ENCODE measurements at regions of chr2 and their contacts with region 1.

Region 1: DNA sequence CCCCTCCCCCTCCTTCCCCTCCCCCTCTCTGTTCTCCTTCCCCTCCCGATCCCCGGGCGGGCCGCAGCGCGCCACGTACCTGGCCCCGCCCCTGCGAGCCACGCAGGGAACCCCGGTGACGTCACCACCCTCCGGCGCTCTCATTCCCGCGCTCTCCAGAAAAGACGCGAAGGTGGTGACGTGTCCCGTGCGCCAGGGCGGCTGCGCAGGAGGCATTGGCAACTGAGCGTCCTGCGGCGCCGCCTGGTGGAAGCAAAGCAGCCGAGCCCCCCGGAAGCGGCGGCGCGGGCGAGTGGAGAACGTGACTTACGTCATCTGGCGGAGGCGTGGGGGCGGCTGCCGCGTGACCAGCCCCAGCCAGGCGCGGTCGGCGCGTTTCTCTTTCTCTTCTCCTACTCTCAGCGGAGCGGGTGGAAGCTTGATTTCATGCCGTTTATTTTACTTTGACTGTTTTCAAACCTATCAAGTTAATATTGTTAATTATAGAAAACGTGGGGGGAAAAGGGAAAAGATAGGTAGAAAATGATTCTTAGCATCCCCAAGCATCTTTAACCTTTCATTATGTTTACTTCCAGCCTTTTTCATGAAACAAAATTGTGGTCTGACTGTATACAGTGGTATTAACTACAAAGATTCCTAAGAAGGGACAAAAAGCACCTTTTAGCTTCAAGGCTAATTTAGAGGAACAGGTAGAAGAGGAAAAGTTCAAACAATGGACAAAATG is 48.1 kb downstream of the C2orf42 start:
- DNase-seq: peak; percentile 100
- H3K4me3 Mint-ChIP-seq: peak overlapping the region; percentile 84
- H3K27ac Mint-ChIP-seq: peak overlapping the region; percentile 97
- H3K4me1 Mint-ChIP-seq: peaks cover 49% of the 10 kb centered on the region
- H3K27me3 Mint-ChIP-seq: no peaks in the 10 kb centered on the region

Region 2: DNA sequence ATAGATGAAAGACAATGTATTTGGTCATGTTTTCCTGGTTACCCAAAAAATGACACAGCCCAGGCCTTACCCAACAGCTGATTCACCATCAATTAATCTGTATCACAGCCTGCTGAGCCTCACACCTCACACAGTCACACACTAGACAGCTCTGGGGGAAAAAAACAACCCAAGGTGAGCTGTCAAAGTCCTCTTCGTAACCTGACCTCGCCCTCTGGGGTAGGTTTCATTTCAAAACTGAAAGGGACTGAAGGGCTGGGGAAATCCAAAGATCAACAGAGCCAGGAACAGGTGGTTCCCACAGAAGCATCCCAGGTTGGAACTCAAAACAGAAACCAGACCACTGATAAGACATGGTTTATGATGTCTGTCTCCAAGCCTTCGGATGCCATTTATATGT is 73.7 kb before region 1 on chr2:
- intact Hi-C with region 1: loop called (anchors 1 kb)
- DNase-seq: peak; percentile 75
- H3K4me3 Mint-ChIP-seq: no peak overlapping the region
- H3K27ac Mint-ChIP-seq: peak overlapping the region; percentile 86
- H3K4me1 Mint-ChIP-seq: peaks cover 41% of the 10 kb centered on the region
- H3K27me3 Mint-ChIP-seq: no peaks in the 10 kb centered on the region

Region 3: GRCh38 chr2:70104231-70105111 is 38.3 kb before region 1 on chr2:
- intact Hi-C with region 1: loop called (anchors 2 kb)
- DNase-seq: peak; percentile 29
- H3K4me3 Mint-ChIP-seq: peak overlapping the region; percentile 78
- H3K27ac Mint-ChIP-seq: peak overlapping the region; percentile 90
- H3K4me1 Mint-ChIP-seq: peaks cover 52% of the 10 kb centered on the region
- H3K27me3 Mint-ChIP-seq: no peaks in the 10 kb centered on the region

Region 4: GRCh38 chr2:70132244-70133126 is 10.3 kb before region 1 on chr2:
- intact Hi-C with region 1: loop called (anchors 1 kb)
- DNase-seq: no peak
- H3K4me3 Mint-ChIP-seq: peak overlapping the region; percentile 87
- H3K27ac Mint-ChIP-seq: peak overlapping the region; percentile 99
- H3K4me1 Mint-ChIP-seq: peaks cover 61% of the 10 kb centered on the region
- H3K27me3 Mint-ChIP-seq: no peaks in the 10 kb centered on the region

Region 5: GRCh38 chr2:70248181-70248847 is 105.6 kb after region 1 on chr2 and contains the start of gene TIA1:
- intact Hi-C with region 1: loop called (anchors 2 kb)
- DNase-seq: peak; percentile 98
- H3K4me3 Mint-ChIP-seq: peak within 1 kb of the TSS; percentile 95
- H3K27ac Mint-ChIP-seq: peak within 1 kb of the TSS; percentile 98
- H3K4me1 Mint-ChIP-seq: peaks cover 22% of the 10 kb centered on the region
- H3K27me3 Mint-ChIP-seq: no peaks in the 10 kb centered on the region
- total RNA-seq, gene TIA1: 113 TPM in 2 replicates

Region 6: DNA sequence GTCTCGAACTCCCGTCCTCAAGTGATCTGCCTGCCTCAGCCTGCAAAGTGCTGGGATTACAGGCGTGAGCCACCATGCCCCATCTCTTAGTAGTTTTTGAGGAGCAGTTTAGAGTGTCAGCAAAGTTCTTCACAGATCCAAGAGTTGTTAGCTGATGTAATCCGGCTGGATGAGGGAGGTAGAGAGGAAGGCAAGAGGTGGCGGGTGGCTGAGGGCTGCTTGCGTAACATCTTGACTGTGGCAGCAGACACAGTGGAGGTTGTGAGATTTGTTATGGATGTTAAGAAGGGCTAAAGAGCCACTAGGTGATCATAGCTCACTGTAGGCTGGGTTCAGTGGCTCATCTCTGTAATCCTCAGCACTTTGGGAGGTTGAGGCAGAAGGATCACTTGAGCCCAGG is 178.6 kb after region 1 on chr2:
- intact Hi-C with region 1: no loop called
- DNase-seq: no peak
- H3K4me3 Mint-ChIP-seq: no peak overlapping the region
- H3K27ac Mint-ChIP-seq: no peak overlapping the region
- H3K4me1 Mint-ChIP-seq: peaks cover 2% of the 10 kb centered on the region
- H3K27me3 Mint-ChIP-seq: peaks cover 21% of the 10 kb centered on the region

Measured in activated T-helper 2 cell treated with anti-CD3 and anti-CD28 coated beads, Interferon-gamma antibody, Interleukin-2, Interleukin-4, amounts not matched to agents 10 μg/mL and 5 μg/mL and 100 μg/mL, durations not matched to agents 14 hours and 24 hours and 36 hours (primary cell).